RWPE1 (cell line): ENCODE measurements at regions of chrX and their contacts with region 1.

Region 1: GRCh38 chrX:119826399-119826959 is 26.3 kb downstream of the UPF3B start:
- DNase-seq: no peak
- H3K27ac ChIP-seq: no peak overlapping the region
- CTCF ChIP-seq: no peak

Region 2: DNA sequence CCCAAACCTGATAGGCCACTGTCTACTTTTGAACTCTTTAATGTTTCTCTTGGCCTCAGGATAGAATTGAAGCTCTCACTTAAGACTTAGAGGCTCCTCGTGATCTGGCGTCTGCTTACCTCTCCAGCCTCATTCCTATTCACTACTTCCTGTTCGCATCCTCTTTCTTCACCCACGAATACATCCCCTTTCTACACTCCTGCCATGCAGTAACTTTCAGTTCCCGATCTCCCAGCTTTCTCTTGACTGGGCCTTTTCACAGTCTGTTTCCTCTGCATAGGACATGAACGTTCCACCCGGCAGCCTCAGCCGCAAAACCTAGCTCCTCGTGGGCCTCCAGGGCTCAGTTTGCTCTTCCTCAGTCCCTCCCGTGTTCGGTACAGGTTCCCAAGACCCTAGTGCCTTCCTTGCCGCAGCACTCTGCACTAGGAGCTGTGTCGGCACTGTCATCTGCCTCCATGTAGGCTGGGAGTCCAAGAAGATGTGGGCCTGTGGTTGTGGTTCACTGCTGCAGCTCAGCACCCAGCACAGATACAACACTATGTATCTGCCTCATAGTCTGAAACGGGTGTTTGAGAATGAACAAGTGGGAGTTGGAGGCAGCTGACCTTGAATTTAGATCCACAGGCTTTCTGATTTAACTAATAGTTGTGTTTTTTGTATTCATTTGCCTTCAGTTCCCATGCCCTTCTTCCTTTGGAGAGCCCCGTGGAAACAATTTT is 50.8 kb before region 1 on chrX:
- CTCF ChIA-PET with region 1: no interaction called
- POLR2A ChIA-PET with region 1: no interaction called
- DNase-seq: no peak
- H3K27ac ChIP-seq: no peak overlapping the region
- CTCF ChIP-seq: no peak

Region 3: GRCh38 chrX:119852382-119853353 is 26.2 kb after region 1 on chrX and contains the start of gene UPF3B:
- CTCF ChIA-PET with region 1: interaction called, 10 read pairs
- POLR2A ChIA-PET with region 1: no interaction called
- DNase-seq: peak; percentile 94
- H3K27ac ChIP-seq: peak within 1 kb of the TSS; percentile 83
- CTCF ChIP-seq: no peak